Mammary epithelial cell (primary cell): ENCODE measurements at regions of chr19 and their contacts with region 1.

Region 1: GRCh38 chr19:44164673-44165512 is at the start of gene ZNF226:
- DNase-seq: peak; percentile 99
- H3K4me3 ChIP-seq: peak within 1 kb of the TSS; percentile 80 to 82 (median 81)
- H3K27ac ChIP-seq: peak within 1 kb of the TSS; percentile 79
- H3K4me1 ChIP-seq: peaks cover 10% of the 10 kb centered on the region
- H3K27me3 ChIP-seq: no peaks in the 10 kb centered on the region
- CTCF ChIP-seq: no peak
- total RNA-seq, gene ZNF226: 15.2 to 19.6 TPM

Region 2: GRCh38 chr19:44176590-44176989 is 11.7 kb after region 1 on chr19:
- CTCF ChIA-PET with region 1: no interaction called
- dilution Hi-C with region 1: no loop called
- in situ Hi-C with region 1: no loop called
- intact Hi-C with region 1: no loop called
- DNase-seq: no peak
- H3K4me3 ChIP-seq: no peak overlapping the region
- H3K27ac ChIP-seq: no peak overlapping the region
- H3K4me1 ChIP-seq: no peaks in the 10 kb centered on the region
- H3K27me3 ChIP-seq: no peaks in the 10 kb centered on the region
- CTCF ChIP-seq: no peak

Region 3: GRCh38 chr19:44212250-44212865 is 47.5 kb after region 1 on chr19 and contains the start of gene ZNF227:
- CTCF ChIA-PET with region 1: no interaction called
- dilution Hi-C with region 1: no loop called
- in situ Hi-C with region 1: no loop called
- intact Hi-C with region 1: loop called (anchors 2 kb)
- DNase-seq: peak; percentile 96
- H3K4me3 ChIP-seq: peak within 1 kb of the TSS; percentile 72 to 95 (median 95)
- H3K27ac ChIP-seq: peak within 1 kb of the TSS; percentile 57
- H3K4me1 ChIP-seq: no peaks in the 10 kb centered on the region
- H3K27me3 ChIP-seq: no peaks in the 10 kb centered on the region
- CTCF ChIP-seq: no peak
- total RNA-seq, gene ZNF227: 11.1 to 12.8 TPM

Region 4: DNA sequence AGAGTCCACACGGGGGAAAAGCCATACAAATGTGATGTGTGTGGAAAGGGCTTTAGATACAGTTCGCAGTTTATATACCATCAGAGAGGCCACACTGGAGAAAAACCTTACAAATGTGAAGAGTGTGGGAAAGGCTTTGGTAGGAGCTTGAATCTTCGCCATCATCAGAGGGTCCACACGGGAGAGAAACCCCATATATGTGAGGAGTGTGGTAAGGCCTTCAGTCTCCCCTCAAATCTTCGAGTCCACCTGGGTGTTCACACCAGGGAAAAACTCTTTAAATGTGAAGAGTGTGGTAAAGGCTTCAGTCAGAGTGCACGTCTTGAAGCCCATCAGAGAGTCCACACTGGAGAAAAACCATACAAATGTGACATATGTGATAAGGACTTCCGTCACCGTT is 71.5 kb after region 1 on chr19:
- CTCF ChIA-PET with region 1: no interaction called
- dilution Hi-C with region 1: loop called (anchors 5 kb)
- in situ Hi-C with region 1: no loop called
- intact Hi-C with region 1: no loop called
- DNase-seq: no peak
- H3K4me3 ChIP-seq: no peak overlapping the region
- H3K27ac ChIP-seq: no peak overlapping the region
- H3K4me1 ChIP-seq: no peaks in the 10 kb centered on the region
- H3K27me3 ChIP-seq: no peaks in the 10 kb centered on the region
- CTCF ChIP-seq: no peak

Region 5: GRCh38 chr19:44356383-44357111 is 191.7 kb after region 1 on chr19 and contains the start of gene ZNF112:
- CTCF ChIA-PET with region 1: no interaction called
- dilution Hi-C with region 1: no loop called
- in situ Hi-C with region 1: no loop called
- intact Hi-C with region 1: loop called (anchors 1 kb)
- DNase-seq: peak; percentile 97
- H3K4me3 ChIP-seq: peak within 1 kb of the TSS; percentile 66 to 86 (median 69)
- H3K27ac ChIP-seq: peak within 1 kb of the TSS; percentile 37
- H3K4me1 ChIP-seq: peaks cover 2% of the 10 kb centered on the region
- H3K27me3 ChIP-seq: no peaks in the 10 kb centered on the region
- CTCF ChIP-seq: no peak
- total RNA-seq, gene ZNF112: 4.7 to 6.5 TPM

Region 6: GRCh38 chr19:44401139-44402115 is 236.5 kb after region 1 on chr19 and contains the start of gene ZNF285:
- CTCF ChIA-PET with region 1: no interaction called
- dilution Hi-C with region 1: no loop called
- in situ Hi-C with region 1: no loop called
- intact Hi-C with region 1: loop called (anchors 1 kb)
- DNase-seq: peak; percentile 95
- H3K4me3 ChIP-seq: peak within 1 kb of the TSS; percentile 61 to 82 (median 69)
- H3K27ac ChIP-seq: no peak within 1 kb of the TSS
- H3K4me1 ChIP-seq: no peaks in the 10 kb centered on the region
- H3K27me3 ChIP-seq: no peaks in the 10 kb centered on the region
- CTCF ChIP-seq: no peak
- total RNA-seq, gene ZNF285: 2.7 to 2.8 TPM